Activated CD8-positive, alpha-beta T cell treated with anti-CD3 and anti-CD28 coated beads, Interleukin-2, amount 10 ng/mL, durations not matched to agents 7 days and 5 days (primary cell): ENCODE measurements at regions of chr17 and their contacts with region 1.

Region 1: DNA sequence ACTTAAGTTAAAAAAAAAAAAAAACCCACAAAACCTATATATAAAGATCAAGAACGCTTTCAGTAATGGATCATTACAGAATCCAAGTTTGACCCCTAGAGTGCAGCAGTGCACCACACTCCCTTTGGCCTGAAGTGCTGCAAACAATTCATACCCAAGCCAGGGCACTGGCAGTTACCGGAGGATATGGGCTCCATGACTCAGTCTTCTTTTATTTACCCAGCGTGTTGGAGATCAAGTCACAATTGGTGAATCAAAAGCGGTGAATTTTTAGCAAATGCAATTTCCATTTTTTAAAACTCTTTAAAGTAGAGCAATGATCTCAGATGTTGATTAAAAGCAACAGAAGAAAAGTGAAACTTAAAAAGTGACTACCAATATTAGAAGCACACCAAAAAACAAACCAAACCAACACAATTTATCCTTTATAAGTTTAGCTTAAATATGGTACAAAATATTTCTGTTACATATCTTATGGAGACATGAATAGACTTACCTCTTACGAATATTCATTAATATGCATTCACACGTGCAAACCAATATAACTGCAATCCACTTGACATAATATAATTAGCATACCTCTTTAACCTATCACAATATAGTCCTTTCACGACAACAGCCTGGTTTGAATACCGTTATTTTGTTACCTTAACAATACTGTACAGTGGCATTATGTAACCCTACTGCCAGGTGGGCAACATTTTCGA is 46.3 kb downstream of the ZNF652 start:
- DNase-seq: peak; percentile 90
- ATAC-seq: peak; percentile 99
- H3K4me3 Mint-ChIP-seq: peak overlapping the region; percentile 60
- H3K27ac Mint-ChIP-seq: peak overlapping the region; percentile 77
- H3K4me1 Mint-ChIP-seq: peaks cover 37% of the 10 kb centered on the region
- H3K27me3 Mint-ChIP-seq: no peaks in the 10 kb centered on the region

Region 2: GRCh38 chr17:49327835-49328784 is 12.4 kb after region 1 on chr17:
- CTCF ChIA-PET with region 1: interaction called, 30 read pairs
- POLR2A ChIA-PET with region 1: no interaction called
- DNase-seq: no peak
- ATAC-seq: no peak
- H3K4me3 Mint-ChIP-seq: no peak overlapping the region
- H3K27ac Mint-ChIP-seq: peak overlapping the region; percentile 30
- H3K4me1 Mint-ChIP-seq: peaks cover 40% of the 10 kb centered on the region
- H3K27me3 Mint-ChIP-seq: no peaks in the 10 kb centered on the region

Region 3: DNA sequence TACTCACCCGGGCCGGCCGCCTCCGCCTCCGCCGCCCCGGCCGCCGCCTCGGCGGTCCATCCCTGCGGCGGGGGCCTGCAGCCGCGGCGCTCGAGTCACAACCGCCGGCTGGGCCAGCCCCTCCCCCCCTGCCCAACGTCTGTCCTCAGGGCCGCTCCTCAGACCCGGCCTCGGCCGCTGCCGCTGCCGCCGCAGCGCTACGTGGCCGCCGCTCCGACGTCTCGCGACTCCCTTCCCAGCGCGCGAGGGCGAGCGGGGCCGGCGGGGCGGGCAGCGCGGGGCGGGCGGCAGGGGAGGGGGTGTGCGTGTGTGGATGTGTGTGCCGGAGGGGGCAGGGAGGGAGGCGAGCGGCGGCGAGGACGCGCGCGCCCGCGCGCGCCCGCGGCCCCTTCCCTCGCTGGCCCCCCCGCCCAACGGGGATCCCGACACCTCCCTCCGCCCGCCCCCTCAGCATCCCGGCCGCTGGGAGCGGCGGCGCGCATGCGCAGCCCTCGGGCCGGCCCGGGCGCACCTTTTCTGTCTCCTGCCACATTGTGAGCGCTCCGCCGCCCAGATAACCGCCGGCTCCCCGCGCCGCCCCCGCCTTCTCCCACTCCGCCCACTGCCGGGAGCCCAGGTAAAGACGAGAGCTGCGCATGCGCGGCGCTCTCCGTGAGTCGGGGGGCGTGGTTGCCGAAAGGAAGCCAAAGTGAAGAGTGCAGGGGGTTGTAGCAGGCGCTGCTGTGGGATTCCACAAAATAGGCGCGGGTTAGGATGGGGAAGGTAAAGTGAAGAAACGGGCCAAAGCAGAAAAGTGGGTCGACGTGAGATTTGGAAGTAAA is 46.4 kb after region 1 on chr17 and contains the start of gene ZNF652:
- CTCF ChIA-PET with region 1: interaction called, 148 read pairs
- POLR2A ChIA-PET with region 1: interaction called, 3 read pairs
- DNase-seq: peak; percentile 97
- ATAC-seq: peak; percentile 72
- H3K4me3 Mint-ChIP-seq: peak within 1 kb of the TSS; percentile 90
- H3K27ac Mint-ChIP-seq: peak within 1 kb of the TSS; percentile 95
- H3K4me1 Mint-ChIP-seq: peaks cover 54% of the 10 kb centered on the region
- H3K27me3 Mint-ChIP-seq: no peaks in the 10 kb centered on the region
- total RNA-seq, gene ZNF652: 27.3 to 27.9 TPM

Region 4: GRCh38 chr17:49399995-49400394 is 84.3 kb after region 1 on chr17:
- CTCF ChIA-PET with region 1: interaction called, 84 read pairs
- POLR2A ChIA-PET with region 1: no interaction called
- DNase-seq: no peak
- ATAC-seq: no peak
- H3K4me3 Mint-ChIP-seq: no peak overlapping the region
- H3K27ac Mint-ChIP-seq: no peak overlapping the region
- H3K4me1 Mint-ChIP-seq: peaks cover 38% of the 10 kb centered on the region
- H3K27me3 Mint-ChIP-seq: no peaks in the 10 kb centered on the region